ENCODE measurements at regions of chr12 and their contacts with region 1.

Region 1: DNA sequence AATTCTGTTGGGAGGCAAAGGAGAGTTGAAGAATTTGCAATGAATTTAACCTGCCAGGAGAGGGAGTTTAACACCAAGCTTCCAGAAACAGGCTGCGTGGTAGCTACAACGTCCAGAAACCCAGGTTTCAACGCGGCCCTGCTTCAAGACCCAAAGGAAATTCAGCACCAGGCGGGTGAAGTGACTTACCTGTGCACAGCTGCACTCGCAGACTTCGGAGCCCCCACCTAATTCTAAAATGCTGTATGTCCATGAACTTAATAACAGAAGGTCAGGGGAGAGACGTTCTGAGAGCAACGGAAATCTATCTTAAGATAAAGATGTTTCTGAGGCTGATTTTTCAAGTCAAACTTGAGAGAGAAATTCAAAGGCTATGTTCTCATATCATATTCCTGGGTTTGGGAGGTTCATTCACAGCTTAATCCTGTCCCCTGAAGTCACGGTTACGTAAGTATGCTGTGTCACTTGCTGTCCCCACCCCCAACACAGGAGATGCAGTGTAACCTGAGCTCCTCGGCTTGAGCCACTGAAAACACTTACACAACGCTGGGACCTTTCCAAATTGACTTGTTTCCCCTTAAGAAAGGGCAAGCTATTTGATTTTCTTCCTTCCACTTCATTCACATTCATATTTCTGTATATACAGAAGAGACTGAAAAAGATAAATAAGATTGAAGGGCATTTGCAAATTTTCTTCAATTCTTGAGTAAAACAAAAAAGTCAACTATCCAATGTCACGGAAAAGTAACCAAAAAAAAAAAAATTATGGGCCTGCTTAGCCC is 22.7 kb downstream of the CLIP1 start:
- DNase-seq: peak; percentile 94
- ATAC-seq: peak; percentile 46
- H3K4me3 ChIP-seq: no peak overlapping the region
- H3K27ac ChIP-seq: peak overlapping the region; percentile 96
- H3K4me1 ChIP-seq: peaks cover 8% of the 10 kb centered on the region
- H3K27me3 ChIP-seq: no peaks in the 10 kb centered on the region
- CTCF ChIP-seq: peak; percentile 85
- POLR2A ChIP-seq: peak; percentile 50
- RAD21 ChIP-seq: peak; percentile 91

Region 2: GRCh38 chr12:122265931-122266771 is 133.6 kb before region 1 on chr12 and contains the start of gene VPS33A:
- CTCF ChIA-PET with region 1: no interaction called
- POLR2A ChIA-PET with region 1: no interaction called
- dilution Hi-C with region 1: no loop called
- in situ Hi-C with region 1: no loop called
- intact Hi-C with region 1: no loop called
- DNase-seq: peak; percentile 99
- ATAC-seq: peak; percentile 91
- H3K4me3 ChIP-seq: peak within 1 kb of the TSS; percentile 71
- H3K27ac ChIP-seq: peak within 1 kb of the TSS; percentile 75
- H3K4me1 ChIP-seq: peaks cover 1% of the 10 kb centered on the region; the same call in 1 of the 2 replicates
- H3K27me3 ChIP-seq: no peaks in the 10 kb centered on the region
- CTCF ChIP-seq: no peak
- POLR2A ChIP-seq: peak; percentile 78
- RAD21 ChIP-seq: 0 out of 2 replicates have a peak, but pooled peaks have one; percentile 16
- total RNA-seq, gene VPS33A: 20.3 and 21.4 TPM in 2 replicates

Region 3: DNA sequence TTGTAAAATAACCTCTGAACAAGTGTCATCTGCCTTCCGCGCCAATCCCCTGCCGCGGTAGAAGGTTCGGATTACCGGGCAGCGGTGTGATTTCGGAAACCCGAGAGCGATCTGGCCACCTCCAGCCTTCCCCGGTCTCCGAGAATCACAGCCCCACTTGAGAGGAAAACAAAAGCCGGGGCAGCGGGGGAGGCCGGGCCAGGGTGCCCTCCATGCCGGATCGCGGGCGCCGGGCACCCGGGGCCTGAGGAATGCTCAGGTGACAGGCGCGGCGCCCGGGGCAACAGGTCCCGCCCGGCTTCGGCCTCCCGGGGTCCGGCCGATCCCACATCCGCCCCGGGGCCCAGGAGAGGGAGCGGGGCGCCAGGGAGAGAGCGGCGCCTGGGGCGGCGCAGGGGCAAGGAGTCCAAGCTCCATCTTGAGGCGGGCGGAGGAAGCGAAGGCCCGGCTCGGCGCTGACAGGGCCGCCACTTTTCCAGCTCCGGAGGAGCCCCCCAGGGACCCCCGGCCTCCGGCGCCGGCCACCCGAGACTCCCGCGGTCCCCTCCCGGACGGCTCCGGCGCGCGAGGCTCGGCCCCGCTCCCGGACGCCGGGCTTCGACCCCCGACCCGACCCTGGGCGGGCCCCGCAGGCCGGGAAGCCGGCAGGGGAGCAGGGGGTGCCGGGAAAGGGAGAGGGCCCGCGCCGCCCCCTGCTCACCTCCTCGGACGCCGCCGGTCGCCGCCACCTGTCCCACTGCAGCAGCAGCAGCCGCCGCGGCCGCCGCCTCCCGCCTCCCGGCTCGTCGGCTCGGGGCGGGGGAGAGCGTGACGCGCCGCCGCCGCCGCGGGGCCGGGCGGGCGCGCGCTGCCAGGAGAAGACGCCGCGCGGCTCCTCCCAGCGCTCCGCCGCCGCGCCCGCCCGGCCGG is 22.3 kb after region 1 on chr12 and contains the start of gene CLIP1:
- CTCF ChIA-PET with region 1: interaction called, 7 read pairs
- POLR2A ChIA-PET with region 1: interaction called, 6 read pairs
- dilution Hi-C with region 1: no loop called
- in situ Hi-C with region 1: no loop called
- intact Hi-C with region 1: loop called (anchors 1 kb)
- DNase-seq: peak; percentile 65
- ATAC-seq: peak; percentile 80
- H3K4me3 ChIP-seq: peak within 1 kb of the TSS; percentile 86
- H3K27ac ChIP-seq: peak within 1 kb of the TSS; percentile 98
- H3K4me1 ChIP-seq: peaks cover 10% of the 10 kb centered on the region
- H3K27me3 ChIP-seq: no peaks in the 10 kb centered on the region
- CTCF ChIP-seq: peak; percentile 53
- POLR2A ChIP-seq: peak; percentile 75
- RAD21 ChIP-seq: peak; percentile 64
- total RNA-seq, gene CLIP1: 54.8 and 58.9 TPM in 2 replicates

Region 4: DNA sequence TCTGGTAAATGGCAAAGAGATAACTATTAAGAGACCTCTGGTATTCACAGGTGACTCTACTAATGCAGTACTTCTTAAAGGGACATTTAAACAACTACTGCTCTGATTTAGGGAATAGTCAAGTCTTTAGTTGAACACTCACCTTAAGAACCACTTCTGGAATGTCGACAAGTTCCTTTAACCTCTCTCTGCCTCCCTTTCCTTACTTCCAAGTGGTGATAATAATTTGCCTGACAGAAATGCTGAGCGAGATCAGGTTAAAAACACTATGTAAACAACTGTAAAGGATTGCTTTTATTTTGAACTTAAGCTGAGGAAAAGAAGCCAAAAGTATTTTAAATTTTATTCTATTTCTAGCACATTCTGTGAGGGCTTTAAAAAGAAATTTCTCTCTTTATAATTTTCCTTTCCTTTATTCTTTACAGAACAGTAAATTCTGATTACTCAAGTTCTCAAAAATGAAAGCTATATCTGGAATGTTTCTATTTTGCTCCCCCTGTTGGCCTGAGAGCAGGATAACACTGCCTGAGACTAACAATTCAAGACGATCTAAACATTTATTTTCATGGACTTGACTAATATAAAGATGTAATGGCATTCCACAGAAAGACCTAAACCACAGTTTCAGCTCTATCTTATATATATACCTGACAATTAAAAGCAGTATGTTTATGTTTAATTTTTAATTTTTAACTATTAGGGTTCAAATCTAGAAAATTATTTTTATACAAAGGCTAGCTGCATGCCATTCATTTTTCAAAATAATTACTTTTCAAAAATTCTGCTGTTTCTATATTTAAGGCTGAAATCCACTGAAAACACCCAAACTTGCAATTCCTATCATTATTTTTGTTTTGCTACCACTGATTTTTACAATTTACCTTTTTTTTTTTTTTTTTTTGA is 71.8 kb after region 1 on chr12:
- CTCF ChIA-PET with region 1: interaction called, 37 read pairs
- POLR2A ChIA-PET with region 1: interaction called, 3 read pairs
- dilution Hi-C with region 1: no loop called
- in situ Hi-C with region 1: no loop called
- intact Hi-C with region 1: loop called (anchors 1 kb)
- DNase-seq: peak; percentile 84
- ATAC-seq: peak; percentile 94
- H3K4me3 ChIP-seq: no peak overlapping the region
- H3K27ac ChIP-seq: peak overlapping the region; percentile 82; the same call in 1 of the 2 replicates
- H3K4me1 ChIP-seq: peaks cover 4% of the 10 kb centered on the region; the same call in 1 of the 2 replicates
- H3K27me3 ChIP-seq: no peaks in the 10 kb centered on the region
- CTCF ChIP-seq: peak; percentile 87
- POLR2A ChIP-seq: no peak
- RAD21 ChIP-seq: peak; percentile 80

Region 5: DNA sequence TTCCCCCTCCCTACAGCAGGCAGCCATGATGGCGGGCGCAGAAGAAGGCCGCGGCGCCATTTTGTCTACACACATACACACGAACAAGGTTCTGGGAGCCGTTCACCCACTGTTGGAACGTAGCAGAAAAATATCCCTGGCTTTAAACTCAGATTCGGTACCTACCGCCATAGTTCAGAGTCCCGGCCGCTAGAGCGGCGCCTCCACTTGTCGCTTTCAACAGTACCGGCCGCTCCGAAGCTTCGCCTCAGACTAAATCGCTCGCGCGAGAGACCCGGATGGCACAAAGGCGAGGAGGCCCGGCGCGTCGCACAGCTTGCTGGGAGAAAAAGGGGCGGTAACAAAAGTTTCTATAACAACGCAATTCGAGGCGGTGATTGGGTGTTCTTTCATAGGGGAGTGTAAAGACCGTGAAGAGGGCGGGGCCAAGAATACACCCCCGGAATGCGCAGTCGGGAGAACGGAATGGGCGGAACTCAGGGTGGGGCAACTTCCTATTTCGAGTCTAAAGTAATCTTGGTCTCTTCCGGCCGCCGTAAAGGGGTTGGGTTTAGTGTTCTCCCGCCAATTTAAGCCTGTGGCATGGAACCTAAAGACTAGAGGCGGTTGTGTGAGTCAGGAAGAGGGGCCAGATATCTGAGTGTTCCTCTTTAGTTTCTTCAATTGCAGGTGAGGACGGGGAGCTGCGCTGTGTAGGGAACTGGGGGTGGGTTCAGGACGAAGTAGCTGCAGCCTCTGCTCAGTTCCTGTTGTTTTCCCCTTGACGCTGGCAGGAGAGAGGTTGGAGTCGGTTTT is 127.1 kb after region 1 on chr12 and contains the starts of genes KNTC1 and RSRC2:
- CTCF ChIA-PET with region 1: no interaction called
- POLR2A ChIA-PET with region 1: interaction called, 4 read pairs
- dilution Hi-C with region 1: no loop called
- in situ Hi-C with region 1: no loop called
- intact Hi-C with region 1: loop called (anchors 2 kb)
- DNase-seq: peak; percentile 100
- ATAC-seq: peak; percentile 97
- H3K4me3 ChIP-seq: peak within 1 kb of the TSS; percentile 70
- H3K27ac ChIP-seq: peak within 1 kb of the TSS; percentile 96
- H3K4me1 ChIP-seq: peaks cover 4% of the 10 kb centered on the region
- H3K27me3 ChIP-seq: no peaks in the 10 kb centered on the region
- CTCF ChIP-seq: no peak
- POLR2A ChIP-seq: peak; percentile 99
- RAD21 ChIP-seq: no peak
- total RNA-seq, gene KNTC1: 23.7 and 32.8 TPM in 2 replicates
- total RNA-seq, gene RSRC2: 18.6 and 41.7 TPM in 2 replicates

Region 6: GRCh38 chr12:122752464-122753318 is 352.9 kb after region 1 on chr12 and contains the start of gene DENR:
- CTCF ChIA-PET with region 1: no interaction called
- POLR2A ChIA-PET with region 1: no interaction called
- dilution Hi-C with region 1: no loop called
- in situ Hi-C with region 1: no loop called
- intact Hi-C with region 1: loop called (anchors 10 kb)
- DNase-seq: peak; percentile 98
- ATAC-seq: peak; percentile 98
- H3K4me3 ChIP-seq: peak within 1 kb of the TSS; percentile 62
- H3K27ac ChIP-seq: peak within 1 kb of the TSS; percentile 83
- H3K4me1 ChIP-seq: peaks cover 6% of the 10 kb centered on the region
- H3K27me3 ChIP-seq: no peaks in the 10 kb centered on the region
- CTCF ChIP-seq: peak; percentile 98
- POLR2A ChIP-seq: peak; percentile 93
- RAD21 ChIP-seq: peak; percentile 96
- total RNA-seq, gene DENR: 8.2 and 32.2 TPM in 2 replicates

Region 7: GRCh38 chr12:122785503-122785902 is 385.7 kb after region 1 on chr12:
- CTCF ChIA-PET with region 1: no interaction called
- POLR2A ChIA-PET with region 1: no interaction called
- dilution Hi-C with region 1: no loop called
- in situ Hi-C with region 1: no loop called
- intact Hi-C with region 1: no loop called
- DNase-seq: no peak
- ATAC-seq: no peak
- H3K4me3 ChIP-seq: no peak overlapping the region
- H3K27ac ChIP-seq: no peak overlapping the region
- H3K4me1 ChIP-seq: 0 out of 2 replicates have a peak, but pooled peaks cover 3% of the 10 kb centered on the region
- H3K27me3 ChIP-seq: no peaks in the 10 kb centered on the region
- CTCF ChIP-seq: no peak
- POLR2A ChIP-seq: no peak
- RAD21 ChIP-seq: no peak